ENCODE measurements at regions of chr1 and their contacts with region 1.

Region 1: GRCh38 chr1:84944767-84945486 is 51.9 kb upstream of the LPAR3 start:
- DNase-seq: peak; percentile 65
- H3K4me3 ChIP-seq: peak overlapping the region; percentile 46
- CTCF ChIP-seq: peak; percentile 75

Region 2: DNA sequence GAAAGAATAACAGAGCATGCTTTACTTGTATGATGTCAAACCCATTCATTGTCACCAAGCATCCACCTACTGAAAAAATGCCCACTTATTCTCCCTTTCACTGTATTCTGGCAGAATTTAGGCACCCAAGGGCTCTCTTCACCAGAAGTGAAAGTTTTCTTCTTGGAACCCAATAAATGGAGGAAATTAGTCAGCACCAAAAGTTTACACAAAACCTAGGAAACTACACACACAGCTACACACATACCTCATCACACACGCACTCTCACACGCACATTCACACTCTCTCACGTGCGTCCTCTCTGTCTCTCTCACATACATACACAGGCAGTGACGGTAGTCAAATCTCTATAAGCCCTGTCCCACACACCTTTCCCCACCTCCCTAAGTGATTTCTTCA is 14.4 kb after region 1 on chr1:
- CTCF ChIA-PET with region 1: interaction called, 94 read pairs
- POLR2A ChIA-PET with region 1: no interaction called
- DNase-seq: no peak
- H3K4me3 ChIP-seq: no peak overlapping the region
- CTCF ChIP-seq: no peak

Region 3: DNA sequence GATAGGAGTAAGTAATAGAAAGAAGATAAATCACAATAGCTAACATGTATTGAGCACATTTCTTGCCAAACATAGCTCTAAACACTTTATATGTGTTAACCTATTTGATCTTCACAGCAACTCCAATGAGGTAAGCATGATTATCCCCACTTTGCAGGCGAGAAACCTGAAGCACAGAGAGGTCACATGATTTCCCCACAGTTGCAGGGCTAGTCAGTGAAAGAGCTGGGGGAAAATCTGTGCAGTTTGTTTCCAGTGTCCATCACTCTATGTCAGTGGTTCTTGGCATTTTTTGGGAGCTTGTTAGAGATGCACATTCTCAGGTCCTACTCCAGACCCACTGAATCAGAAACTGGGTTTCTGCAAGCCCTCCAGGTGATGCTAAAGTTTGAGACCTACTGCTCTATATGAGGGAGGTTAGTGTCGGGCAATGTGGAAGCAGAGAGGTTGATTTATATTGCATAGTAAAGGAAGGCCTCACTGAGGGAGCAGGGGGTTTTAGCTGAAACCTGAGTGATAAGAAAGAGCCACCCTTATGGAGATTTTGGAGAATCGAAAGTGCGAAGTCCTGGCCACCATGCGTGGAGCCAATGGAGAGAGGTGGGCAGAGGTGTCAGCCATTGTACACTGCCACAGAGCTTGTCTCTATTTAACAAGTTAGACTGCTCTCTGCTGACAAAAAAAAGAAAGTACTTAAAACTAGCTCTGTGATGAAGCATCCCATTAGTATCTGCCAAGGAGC is 82.5 kb after region 1 on chr1:
- CTCF ChIA-PET with region 1: interaction called, 124 read pairs
- POLR2A ChIA-PET with region 1: no interaction called
- DNase-seq: no peak
- H3K4me3 ChIP-seq: no peak overlapping the region
- CTCF ChIP-seq: no peak

Region 4: DNA sequence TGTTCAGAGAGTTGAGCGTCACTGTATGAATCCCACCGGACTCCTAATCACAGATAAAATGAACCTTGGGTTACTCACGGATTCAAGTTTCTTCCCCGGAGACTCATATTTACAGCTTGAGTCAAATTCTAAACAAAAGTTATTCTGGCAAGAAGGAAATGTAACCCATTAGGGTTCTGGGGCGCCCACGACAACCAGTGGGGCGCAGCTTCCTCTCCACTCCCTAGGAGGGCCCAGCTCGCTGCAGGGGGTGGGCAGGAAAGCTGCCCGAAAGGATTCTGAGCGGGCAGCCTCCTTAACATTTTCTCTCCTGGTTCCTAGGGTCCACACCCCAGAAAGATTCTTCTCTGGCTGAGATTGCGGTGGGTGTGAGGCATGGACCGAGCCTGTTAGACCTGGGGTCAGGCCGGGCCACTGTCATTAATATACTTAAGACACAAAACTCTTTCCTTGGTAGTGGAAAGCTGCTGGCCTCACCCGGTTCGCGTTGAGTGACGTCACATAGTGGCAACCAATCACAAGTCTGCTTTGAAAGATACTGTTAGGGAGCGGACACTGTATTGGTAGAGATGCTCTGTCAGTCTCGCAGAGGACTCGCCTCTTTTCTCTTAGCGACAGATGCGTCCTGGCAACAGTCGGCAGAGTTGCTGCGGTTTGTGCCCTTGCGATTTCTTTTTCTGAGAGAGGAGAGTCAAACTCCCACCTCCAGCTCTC is 116.9 kb after region 1 on chr1:
- CTCF ChIA-PET with region 1: interaction called, 17 read pairs
- POLR2A ChIA-PET with region 1: interaction called, 3 read pairs
- DNase-seq: peak; percentile 90
- H3K4me3 ChIP-seq: peak overlapping the region; percentile 62
- CTCF ChIP-seq: no peak

Region 5: DNA sequence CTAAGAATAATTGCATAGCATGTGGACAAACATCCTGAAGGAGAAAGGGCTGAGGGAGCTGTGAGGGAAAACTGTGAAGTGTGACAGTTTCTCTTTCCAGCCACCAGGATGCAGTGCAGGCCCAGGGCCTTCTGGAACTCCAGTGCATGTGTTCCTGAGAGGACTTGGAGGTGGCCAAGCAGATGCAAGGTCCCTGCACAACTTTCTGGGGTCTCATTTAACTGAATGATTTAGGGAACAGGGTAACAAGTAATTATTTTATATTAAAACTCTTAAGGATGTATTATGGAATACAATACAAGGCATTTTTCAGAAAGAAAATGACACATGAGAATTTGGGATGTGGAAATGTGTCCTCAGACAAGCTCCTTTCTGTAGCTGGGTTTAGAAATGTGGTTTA is 164.5 kb after region 1 on chr1:
- CTCF ChIA-PET with region 1: interaction called, 35 read pairs
- POLR2A ChIA-PET with region 1: no interaction called
- DNase-seq: no peak
- H3K4me3 ChIP-seq: no peak overlapping the region
- CTCF ChIP-seq: peak; percentile 89

Measured in AG04449 (cell line).